CD8-positive, alpha-beta T cell (primary cell): ENCODE measurements at regions of chr5 and their contacts with region 1.

Region 1: GRCh38 chr5:32076699-32077695 is 97.1 kb downstream of the GOLPH3 start:
- DNase-seq: peak in 7 of 9 experiments; percentile 7 to 60 (median 37)
- ATAC-seq: no peak
- H3K4me3 ChIP-seq: no peak overlapping the region
- H3K4me3 Mint-ChIP-seq: no peak overlapping the region
- H3K27ac ChIP-seq: no peak overlapping the region
- H3K27ac Mint-ChIP-seq: no peak overlapping the region
- H3K4me1 ChIP-seq: no peaks in the 10 kb centered on the region
- H3K4me1 Mint-ChIP-seq: no peaks in the 10 kb centered on the region
- H3K27me3 ChIP-seq: no peaks in the 10 kb centered on the region
- H3K27me3 Mint-ChIP-seq: no peaks in the 10 kb centered on the region
- CTCF ChIP-seq: peak; percentile 62

Region 2: DNA sequence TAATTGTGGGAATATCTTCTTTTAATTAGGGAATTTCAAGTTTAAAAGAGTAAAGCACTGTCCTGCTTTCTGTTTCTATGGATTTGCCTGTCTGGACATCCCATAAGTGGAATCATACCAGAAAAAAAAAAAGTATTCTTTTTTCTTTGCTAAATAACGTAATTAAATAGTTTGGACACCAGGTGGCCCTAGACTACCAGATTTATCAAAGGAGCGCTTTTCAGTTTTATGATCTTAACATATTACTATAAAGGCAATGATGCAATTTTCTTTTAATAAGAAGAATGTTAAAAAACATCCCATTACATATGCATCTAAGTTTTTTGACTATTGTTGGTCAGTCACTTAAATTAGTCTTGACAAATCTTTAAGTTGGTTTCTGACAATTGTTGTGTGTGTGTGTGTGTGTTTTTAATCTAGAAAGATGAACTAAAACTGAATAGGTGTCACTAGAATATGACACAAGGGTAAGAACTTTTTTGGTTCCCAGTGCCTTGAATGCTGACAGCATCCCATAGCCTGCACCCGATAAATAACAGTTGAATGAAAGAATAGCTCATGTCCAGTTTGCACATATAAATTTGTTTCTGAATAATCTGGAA is 495.4 kb before region 1 on chr5:
- CTCF ChIA-PET with region 1: interaction called, 3 read pairs
- POLR2A ChIA-PET with region 1: no interaction called
- intact Hi-C with region 1: loop called (anchors 1 kb)
- DNase-seq: peak in 2 of 9 experiments; percentile 49 to 52
- ATAC-seq: no peak
- H3K4me3 ChIP-seq: no peak overlapping the region
- H3K4me3 Mint-ChIP-seq: no peak overlapping the region
- H3K27ac ChIP-seq: no peak overlapping the region
- H3K27ac Mint-ChIP-seq: no peak overlapping the region
- H3K4me1 ChIP-seq: no peaks in the 10 kb centered on the region
- H3K4me1 Mint-ChIP-seq: no peaks in the 10 kb centered on the region
- H3K27me3 ChIP-seq: no peaks in the 10 kb centered on the region
- H3K27me3 Mint-ChIP-seq: peaks cover 16% of the 10 kb centered on the region
- CTCF ChIP-seq: peak; percentile 58

Region 3: GRCh38 chr5:31806561-31806960 is 270.4 kb before region 1 on chr5:
- CTCF ChIA-PET with region 1: interaction called, 10 read pairs
- POLR2A ChIA-PET with region 1: no interaction called
- intact Hi-C with region 1: no loop called
- DNase-seq: no peak
- ATAC-seq: no peak
- H3K4me3 ChIP-seq: no peak overlapping the region
- H3K4me3 Mint-ChIP-seq: no peak overlapping the region
- H3K27ac ChIP-seq: no peak overlapping the region
- H3K27ac Mint-ChIP-seq: no peak overlapping the region
- H3K4me1 ChIP-seq: no peaks in the 10 kb centered on the region
- H3K4me1 Mint-ChIP-seq: no peaks in the 10 kb centered on the region
- H3K27me3 ChIP-seq: no peaks in the 10 kb centered on the region
- H3K27me3 Mint-ChIP-seq: peaks cover 4% of the 10 kb centered on the region
- CTCF ChIP-seq: no peak

Region 4: GRCh38 chr5:31825518-31826068 is 251.4 kb before region 1 on chr5:
- CTCF ChIA-PET with region 1: interaction called, 71 read pairs
- POLR2A ChIA-PET with region 1: no interaction called
- intact Hi-C with region 1: loop called in 1 of 2 experiments (anchors 1 kb)
- DNase-seq: peak in 6 of 9 experiments; percentile 35 to 69 (median 45)
- ATAC-seq: peak; percentile 70
- H3K4me3 ChIP-seq: no peak overlapping the region
- H3K4me3 Mint-ChIP-seq: peak overlapping the region; percentile 58
- H3K27ac ChIP-seq: no peak overlapping the region
- H3K27ac Mint-ChIP-seq: no peak overlapping the region
- H3K4me1 ChIP-seq: no peaks in the 10 kb centered on the region
- H3K4me1 Mint-ChIP-seq: peaks cover 7% of the 10 kb centered on the region
- H3K27me3 ChIP-seq: no peaks in the 10 kb centered on the region
- H3K27me3 Mint-ChIP-seq: peaks cover 11% of the 10 kb centered on the region
- CTCF ChIP-seq: peak; percentile 54

Region 5: DNA sequence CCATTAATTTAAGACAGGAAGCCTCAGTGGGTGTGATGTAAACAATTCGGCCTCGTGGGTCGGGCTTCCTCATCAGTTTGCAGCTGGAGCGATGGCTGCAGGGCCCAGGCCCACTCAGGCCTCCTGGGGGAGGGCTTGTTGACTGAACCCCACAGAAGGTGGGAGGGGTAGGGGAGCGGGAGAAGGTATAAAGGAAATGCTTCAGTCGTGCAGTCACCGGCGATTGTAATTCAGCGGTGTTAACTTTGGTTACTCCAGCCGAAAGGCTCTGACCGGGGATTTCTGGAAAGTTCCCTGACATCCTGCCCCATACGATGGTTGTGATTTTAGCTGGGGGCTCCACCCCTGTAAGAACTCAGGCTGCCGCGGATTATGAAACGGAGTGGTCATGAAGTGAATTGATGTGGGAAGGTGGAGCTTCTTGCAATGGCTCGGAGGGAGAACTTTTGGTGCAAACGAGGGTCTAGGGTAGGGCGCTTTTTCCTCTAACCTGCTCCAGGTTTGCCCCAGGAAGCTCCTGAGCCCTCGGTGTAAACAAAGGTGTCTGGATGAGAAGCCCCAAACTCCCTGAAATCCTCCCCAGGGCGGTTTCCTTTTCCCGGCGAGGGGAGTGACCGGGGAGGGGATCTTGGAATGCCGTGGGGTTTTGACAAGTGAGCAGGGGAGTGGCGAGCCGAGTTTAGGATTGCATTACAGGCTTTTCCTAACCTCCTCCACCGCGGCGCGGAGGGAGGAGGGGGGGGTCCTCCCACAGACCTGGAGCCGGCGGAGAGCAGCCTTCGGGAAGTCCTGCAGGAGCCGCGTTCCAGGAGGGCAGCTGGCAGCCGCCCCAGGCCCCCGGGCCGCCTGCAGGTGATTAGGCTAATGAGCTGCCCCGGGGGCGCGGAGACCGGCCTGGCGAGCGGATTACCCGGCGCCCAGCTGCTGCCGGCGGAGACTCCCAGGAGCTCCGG is 222.5 kb before region 1 on chr5:
- CTCF ChIA-PET with region 1: interaction called, 21 read pairs
- POLR2A ChIA-PET with region 1: no interaction called
- intact Hi-C with region 1: loop called in 1 of 2 experiments (anchors 10 kb)
- DNase-seq: peak in 3 of 9 experiments; percentile 7 to 50 (median 31)
- ATAC-seq: peak; percentile 40
- H3K4me3 ChIP-seq: peak overlapping the region; percentile 41 to 63
- H3K4me3 Mint-ChIP-seq: peak overlapping the region; percentile 80
- H3K27ac ChIP-seq: no peak overlapping the region
- H3K27ac Mint-ChIP-seq: peak overlapping the region; percentile 57
- H3K4me1 ChIP-seq: peaks cover 15% of the 10 kb centered on the region
- H3K4me1 Mint-ChIP-seq: peaks cover 27% of the 10 kb centered on the region
- H3K27me3 ChIP-seq: no peaks in the 10 kb centered on the region
- H3K27me3 Mint-ChIP-seq: peaks cover 21% of the 10 kb centered on the region
- CTCF ChIP-seq: no peak

Region 6: DNA sequence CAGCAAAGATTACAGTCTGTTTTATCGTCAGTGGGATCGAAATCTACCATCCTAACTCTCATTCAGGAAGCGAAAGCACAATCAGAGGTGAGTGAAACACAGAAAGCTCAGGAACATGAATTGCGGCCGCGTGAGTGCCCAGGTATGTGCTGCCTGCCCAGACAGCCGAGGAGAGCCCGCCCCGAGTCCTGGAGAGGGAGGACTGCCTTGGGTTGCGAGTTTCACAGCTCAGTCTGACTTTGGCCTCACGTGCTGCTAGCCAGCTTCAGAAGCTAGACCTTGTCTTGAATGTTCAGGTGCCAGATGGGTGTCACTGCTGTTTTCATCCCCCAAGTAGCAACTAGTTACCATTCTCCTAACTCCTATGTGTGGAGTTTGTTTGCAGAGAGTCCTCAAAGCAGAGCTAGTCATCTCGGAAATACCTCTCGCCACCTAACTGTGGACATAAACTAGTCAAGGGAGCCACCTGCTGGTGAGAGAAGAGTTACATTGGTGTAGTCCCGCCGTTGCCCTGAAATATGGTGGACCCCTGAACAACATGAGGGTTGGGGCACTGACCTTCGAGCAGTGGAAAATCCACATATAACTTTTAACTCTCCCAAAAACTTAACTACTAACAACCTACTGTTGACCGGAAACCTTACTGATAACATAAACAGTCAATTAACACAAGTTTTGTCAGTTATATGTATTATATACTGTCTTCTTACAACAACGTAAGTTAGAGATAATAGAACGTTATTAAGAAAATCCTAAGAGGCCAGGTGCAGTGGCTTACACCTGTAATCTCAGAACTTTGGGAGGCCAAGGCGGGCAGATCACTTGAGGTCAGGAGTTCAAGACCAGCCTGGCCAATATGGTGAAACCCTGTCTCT is 16.2 kb after region 1 on chr5:
- CTCF ChIA-PET with region 1: interaction called, 12 read pairs
- POLR2A ChIA-PET with region 1: no interaction called
- intact Hi-C with region 1: no loop called
- DNase-seq: peak; percentile 25 to 77 (median 65)
- ATAC-seq: peak; percentile 87
- H3K4me3 ChIP-seq: no peak overlapping the region
- H3K4me3 Mint-ChIP-seq: no peak overlapping the region
- H3K27ac ChIP-seq: no peak overlapping the region
- H3K27ac Mint-ChIP-seq: no peak overlapping the region
- H3K4me1 ChIP-seq: no peaks in the 10 kb centered on the region
- H3K4me1 Mint-ChIP-seq: peaks cover 6% of the 10 kb centered on the region
- H3K27me3 ChIP-seq: no peaks in the 10 kb centered on the region
- H3K27me3 Mint-ChIP-seq: no peaks in the 10 kb centered on the region
- CTCF ChIP-seq: peak; percentile 68

Region 7: DNA sequence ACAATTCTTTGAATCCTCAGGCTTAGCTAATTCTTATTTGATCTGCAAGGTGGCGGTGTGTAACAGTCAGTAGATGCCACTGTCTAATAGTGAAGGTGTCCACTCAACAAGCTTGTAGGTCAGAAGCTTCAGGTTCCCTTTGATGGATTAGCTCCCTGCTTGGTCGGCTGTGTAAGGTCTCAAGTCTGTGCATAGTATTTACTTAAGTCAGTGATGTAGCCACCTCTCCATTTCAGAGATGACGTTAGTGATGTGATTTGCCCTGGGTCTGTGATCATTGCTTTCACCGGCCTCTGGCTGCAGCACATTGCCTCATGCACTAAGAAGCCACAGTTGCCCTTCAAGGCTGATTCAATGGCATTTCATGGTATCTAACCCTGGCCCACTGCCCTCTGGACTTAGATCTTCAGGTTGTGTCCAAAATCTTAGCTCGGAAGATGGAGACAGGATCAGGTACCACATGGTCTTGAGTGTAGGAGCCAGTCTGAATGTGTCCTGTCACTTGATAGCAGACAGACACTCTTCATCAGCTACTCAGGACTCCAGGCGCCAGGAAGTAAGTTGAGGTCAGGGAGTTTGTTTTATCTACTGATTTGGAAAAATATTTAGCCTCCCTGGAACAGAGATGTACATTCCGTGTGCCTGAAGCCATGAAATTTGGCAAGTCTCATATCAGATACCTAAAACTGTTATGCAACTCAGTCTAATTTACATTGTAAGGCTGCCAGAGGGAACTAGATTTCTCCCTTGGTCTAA is 551.2 kb after region 1 on chr5:
- CTCF ChIA-PET with region 1: no interaction called
- POLR2A ChIA-PET with region 1: no interaction called
- intact Hi-C with region 1: no loop called
- DNase-seq: no peak
- ATAC-seq: no peak
- H3K4me3 ChIP-seq: no peak overlapping the region
- H3K4me3 Mint-ChIP-seq: no peak overlapping the region
- H3K27ac ChIP-seq: no peak overlapping the region
- H3K27ac Mint-ChIP-seq: no peak overlapping the region
- H3K4me1 ChIP-seq: no peaks in the 10 kb centered on the region
- H3K4me1 Mint-ChIP-seq: no peaks in the 10 kb centered on the region
- H3K27me3 ChIP-seq: no peaks in the 10 kb centered on the region
- H3K27me3 Mint-ChIP-seq: no peaks in the 10 kb centered on the region
- CTCF ChIP-seq: no peak